Sigmoid colon (tissue), 7 donors: ENCODE measurements at regions of chr3 and their contacts with region 1.

Region 1: DNA sequence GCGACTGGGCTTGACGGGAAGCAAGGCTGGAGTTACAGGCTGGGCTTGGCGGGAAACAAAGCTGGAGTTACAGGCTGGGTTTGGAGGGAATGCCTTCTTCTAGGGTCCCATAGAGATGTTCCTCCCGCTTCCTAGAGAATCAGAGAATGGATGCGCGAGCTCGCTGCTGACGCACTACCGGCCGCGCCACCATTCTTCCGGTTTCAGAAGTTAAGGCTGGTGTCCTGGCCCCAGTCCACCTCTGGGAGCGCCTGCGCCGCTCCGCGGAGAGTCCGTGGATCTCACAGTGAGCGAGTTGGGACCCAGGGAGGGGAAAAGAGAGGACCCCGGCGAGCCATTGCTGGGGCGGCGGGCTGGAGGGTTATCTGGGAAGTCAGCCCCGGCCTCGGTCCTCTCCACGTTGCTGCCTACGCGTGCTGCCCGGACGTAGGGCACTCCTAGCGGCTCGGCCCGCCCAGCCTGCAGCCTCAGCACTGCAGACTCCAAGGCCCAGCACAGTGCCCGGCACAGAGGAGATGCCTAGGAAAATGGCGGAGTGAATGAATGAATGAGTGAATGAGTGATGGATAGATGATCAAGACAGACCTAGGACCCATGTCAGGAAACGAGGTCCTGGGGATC is at the start of gene ZNF502:
- DNase-seq: peak; percentile 93
- H3K4me3 ChIP-seq: peak within 1 kb of the TSS; percentile 71 to 92 (median 87)
- H3K27ac ChIP-seq: peak within 1 kb of the TSS; percentile 75 to 82 (median 80)
- H3K4me1 ChIP-seq: peaks cover 0 to 12% (median 9%) of the 10 kb centered on the region in 4 donors
- H3K27me3 ChIP-seq: peaks cover 0 to 4% (median 0%) of the 10 kb centered on the region in 3 donors
- CTCF ChIP-seq: peak in 3 of 4 experiments; percentile 18 to 53 (median 43)
- EP300 ChIP-seq: no peak
- POLR2A ChIP-seq: peak; percentile 24 to 41
- total RNA-seq, gene ZNF502: 5.8 to 8.9 (median 7.7) TPM

Region 2: DNA sequence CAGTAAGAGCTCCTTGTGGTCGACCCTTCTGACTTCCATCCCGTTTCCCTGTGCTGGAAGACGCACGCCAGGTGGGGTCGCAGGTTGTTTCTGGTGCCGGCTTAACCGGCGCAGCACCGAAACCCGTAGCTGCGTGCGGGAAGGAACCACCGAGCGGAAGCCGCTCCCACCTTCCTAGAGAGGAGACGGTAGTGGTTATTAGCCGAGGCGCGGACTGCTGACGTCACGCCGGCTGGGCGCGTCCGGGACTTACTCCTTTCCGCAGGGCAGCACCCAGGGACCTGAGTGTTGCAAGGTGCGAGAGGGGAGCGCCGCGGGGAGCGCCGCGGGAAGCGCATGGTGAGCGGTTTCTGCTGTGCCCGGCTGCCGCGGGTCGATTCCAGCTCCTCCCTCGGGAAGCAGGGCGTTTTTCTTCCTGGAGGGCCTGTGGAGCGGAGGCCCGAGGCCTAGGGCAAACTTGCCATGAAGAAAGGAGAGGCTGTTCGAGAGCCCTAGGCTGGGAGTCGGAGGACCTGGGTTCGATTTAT is 16.9 kb after region 1 on chr3 and contains the start of gene ZNF501:
- intact Hi-C with region 1: loop called (anchors 1 kb)
- DNase-seq: peak; percentile 97
- H3K4me3 ChIP-seq: peak within 1 kb of the TSS; percentile 53 to 85 (median 70)
- H3K27ac ChIP-seq: peak within 1 kb of the TSS; percentile 52 to 73 (median 64)
- H3K4me1 ChIP-seq: peaks cover 0 to 15% (median 9%) of the 10 kb centered on the region in 4 donors
- H3K27me3 ChIP-seq: no peaks in the 10 kb centered on the region
- CTCF ChIP-seq: no peak
- EP300 ChIP-seq: no peak
- POLR2A ChIP-seq: peak in 1 of 2 donors; percentile 32
- total RNA-seq, gene ZNF501: 5.8 to 14.7 (median 10.4) TPM

Region 3: DNA sequence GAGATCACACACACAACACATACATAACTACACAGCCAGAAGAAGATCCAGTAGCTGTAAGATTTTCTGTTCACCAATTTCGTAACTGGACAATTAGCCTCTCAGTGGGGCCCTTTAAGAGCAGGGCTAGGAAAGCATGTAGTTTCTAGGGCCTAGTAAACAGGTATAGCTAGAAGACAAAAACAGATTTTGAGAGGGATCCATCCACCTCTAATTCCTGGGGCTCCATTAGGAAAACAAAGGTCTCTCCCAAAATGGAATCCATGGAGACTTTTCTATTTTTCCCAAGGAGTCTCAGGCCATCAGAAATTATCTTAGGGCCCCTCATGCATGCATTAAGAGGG is 59.5 kb after region 1 on chr3:
- intact Hi-C with region 1: no loop called
- DNase-seq: no peak
- H3K4me3 ChIP-seq: no peak overlapping the region
- H3K27ac ChIP-seq: no peak overlapping the region
- H3K4me1 ChIP-seq: no peaks in the 10 kb centered on the region
- H3K27me3 ChIP-seq: no peaks in the 10 kb centered on the region
- CTCF ChIP-seq: no peak
- EP300 ChIP-seq: no peak
- POLR2A ChIP-seq: no peak

Region 4: DNA sequence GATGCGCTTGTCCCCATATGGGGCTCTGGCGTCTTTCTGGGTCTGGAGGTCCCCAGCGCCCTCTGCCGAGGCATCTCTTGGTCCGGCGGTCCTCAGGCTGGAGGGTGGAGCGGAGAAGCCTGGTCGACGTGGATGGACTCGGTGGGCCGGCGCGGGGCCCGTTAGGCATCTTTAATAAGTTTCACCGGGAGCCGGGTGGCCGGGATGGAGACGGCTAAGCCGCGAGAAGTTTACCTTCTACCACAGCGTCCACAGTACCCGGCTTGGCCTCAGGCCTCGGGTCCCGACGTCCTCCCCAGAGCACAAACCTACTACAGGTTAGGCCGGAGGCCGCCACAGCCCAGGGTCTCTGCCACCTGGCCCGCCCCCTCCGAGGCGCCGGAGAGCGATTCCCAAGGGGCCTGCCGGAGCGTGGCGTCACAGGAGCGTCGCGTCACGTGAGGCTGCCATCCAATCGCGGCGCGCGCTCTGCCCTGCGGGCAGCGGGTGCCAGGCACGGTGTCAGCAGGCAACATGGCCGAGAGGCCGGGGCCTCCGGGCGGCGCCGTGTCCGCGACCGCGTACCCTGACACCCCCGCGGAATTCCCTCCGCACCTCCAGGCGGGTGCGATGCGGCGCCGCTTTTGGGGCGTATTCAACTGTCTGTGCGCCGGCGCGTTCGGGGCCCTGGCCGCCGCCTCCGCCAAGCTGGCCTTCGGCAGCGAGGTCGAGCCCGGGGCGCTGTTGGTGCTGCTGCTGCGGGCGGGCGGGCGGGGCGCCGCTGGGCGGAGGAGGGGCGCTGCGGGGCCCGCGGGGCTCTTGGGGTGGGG is 149.1 kb after region 1 on chr3 and contains the start of gene TMEM42:
- intact Hi-C with region 1: loop called (anchors 5 kb)
- DNase-seq: peak; percentile 95
- H3K4me3 ChIP-seq: peak within 1 kb of the TSS; percentile 62 to 80 (median 71)
- H3K27ac ChIP-seq: peak within 1 kb of the TSS; percentile 93 to 96 (median 94)
- H3K4me1 ChIP-seq: peaks cover 0 to 13% (median 8%) of the 10 kb centered on the region in 4 donors
- H3K27me3 ChIP-seq: no peaks in the 10 kb centered on the region
- CTCF ChIP-seq: no peak
- EP300 ChIP-seq: no peak
- POLR2A ChIP-seq: peak; percentile 61 to 62
- total RNA-seq, gene TMEM42: 8.3 to 25.7 (median 10.4) TPM

Region 5: GRCh38 chr3:45109771-45110508 is 397.4 kb after region 1 on chr3:
- intact Hi-C with region 1: no loop called
- DNase-seq: no peak
- H3K4me3 ChIP-seq: no peak overlapping the region
- H3K27ac ChIP-seq: no peak overlapping the region
- H3K4me1 ChIP-seq: peaks cover 0 to 18% (median 14%) of the 10 kb centered on the region in 4 donors
- H3K27me3 ChIP-seq: no peaks in the 10 kb centered on the region
- CTCF ChIP-seq: no peak
- EP300 ChIP-seq: no peak
- POLR2A ChIP-seq: no peak